PC-9 (cell line): ENCODE measurements at regions of chr2 and their contacts with region 1.

Region 1: GRCh38 chr2:180125245-180125962 is 118.3 kb upstream of the CWC22 start:
- DNase-seq: peak; percentile 76 to 84
- H3K4me3 ChIP-seq: no peak overlapping the region
- H3K27ac ChIP-seq: no peak overlapping the region
- H3K4me1 ChIP-seq: peaks cover 11% of the 10 kb centered on the region; the same call in 1 of the 2 replicates
- H3K27me3 ChIP-seq: no peaks in the 10 kb centered on the region
- CTCF ChIP-seq: peak; percentile 87

Region 2: GRCh38 chr2:180156651-180157050 is 31.2 kb after region 1 on chr2:
- CTCF ChIA-PET with region 1: no interaction called
- POLR2A ChIA-PET with region 1: no interaction called
- intact Hi-C with region 1: no loop called
- DNase-seq: no peak
- H3K4me3 ChIP-seq: no peak overlapping the region
- H3K27ac ChIP-seq: no peak overlapping the region
- H3K4me1 ChIP-seq: no peaks in the 10 kb centered on the region
- H3K27me3 ChIP-seq: no peaks in the 10 kb centered on the region
- CTCF ChIP-seq: no peak

Region 3: DNA sequence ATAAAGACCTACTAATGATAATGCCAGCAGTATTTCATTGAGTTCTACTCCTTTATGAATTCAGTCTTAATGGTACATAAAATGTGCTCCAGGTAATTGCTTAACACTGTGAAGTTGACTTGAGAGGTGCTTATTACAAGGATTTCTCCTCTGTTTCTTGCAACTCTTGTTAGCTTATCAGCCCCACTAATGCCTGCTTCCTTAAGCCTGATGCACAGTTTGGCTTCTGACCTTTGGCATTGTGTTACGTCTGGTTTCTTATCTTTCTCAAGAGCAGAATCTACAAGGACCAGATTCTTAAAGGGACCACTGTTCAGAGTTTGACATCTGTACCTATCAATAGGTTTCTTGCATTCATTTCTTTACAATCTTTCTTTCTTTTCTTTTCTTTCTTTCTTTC is 105.6 kb after region 1 on chr2:
- CTCF ChIA-PET with region 1: interaction called, 20 read pairs
- POLR2A ChIA-PET with region 1: no interaction called
- intact Hi-C with region 1: no loop called
- DNase-seq: no peak
- H3K4me3 ChIP-seq: no peak overlapping the region
- H3K27ac ChIP-seq: no peak overlapping the region
- H3K4me1 ChIP-seq: no peaks in the 10 kb centered on the region
- H3K27me3 ChIP-seq: no peaks in the 10 kb centered on the region
- CTCF ChIP-seq: no peak

Region 4: GRCh38 chr2:180495606-180496005 is 370.2 kb after region 1 on chr2:
- CTCF ChIA-PET with region 1: no interaction called
- POLR2A ChIA-PET with region 1: no interaction called
- intact Hi-C with region 1: no loop called
- DNase-seq: no peak
- H3K4me3 ChIP-seq: no peak overlapping the region
- H3K27ac ChIP-seq: no peak overlapping the region
- H3K4me1 ChIP-seq: no peaks in the 10 kb centered on the region
- H3K27me3 ChIP-seq: no peaks in the 10 kb centered on the region
- CTCF ChIP-seq: no peak

Region 5: DNA sequence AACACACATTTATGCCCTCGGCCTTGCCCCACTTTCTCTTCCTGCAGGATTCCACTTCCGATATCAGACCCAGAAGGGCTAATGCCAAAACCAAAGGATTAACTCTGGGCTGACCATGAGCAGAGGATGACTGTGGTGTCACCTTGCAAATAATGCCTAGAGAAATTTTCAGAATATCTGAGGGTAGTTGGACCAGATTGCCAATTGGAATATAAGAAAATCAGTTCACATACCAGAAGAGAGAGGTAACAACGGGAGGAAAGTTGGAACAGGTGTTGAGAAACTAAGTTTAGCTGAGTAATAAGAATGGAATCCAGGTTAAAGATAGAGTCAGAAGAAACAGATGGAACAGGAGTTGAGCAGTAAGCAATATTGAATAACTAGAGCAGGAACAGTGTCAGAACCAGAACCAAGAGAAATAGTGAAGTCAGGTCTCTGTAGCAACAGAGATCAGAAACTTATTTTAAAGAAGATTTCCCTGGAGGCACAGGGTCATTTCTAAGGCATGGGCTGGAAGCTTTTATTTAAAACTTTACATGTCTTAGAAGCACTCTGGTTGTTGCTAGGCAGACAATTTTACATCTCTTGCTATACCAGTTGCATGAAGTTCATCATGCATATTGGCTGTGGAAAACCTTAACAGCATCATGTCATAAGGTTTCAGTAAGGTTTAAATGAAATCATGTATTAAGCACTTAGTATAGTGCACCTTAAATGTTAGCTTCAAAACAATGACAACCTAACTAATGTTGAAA is 622.5 kb after region 1 on chr2:
- CTCF ChIA-PET with region 1: no interaction called
- POLR2A ChIA-PET with region 1: no interaction called
- intact Hi-C with region 1: loop called (anchors 5 kb)
- DNase-seq: peak; percentile 67 to 95
- H3K4me3 ChIP-seq: peak overlapping the region; percentile 6; the same call in 1 of the 2 replicates
- H3K27ac ChIP-seq: peak overlapping the region; percentile 49
- H3K4me1 ChIP-seq: peaks cover 26% of the 10 kb centered on the region
- H3K27me3 ChIP-seq: no peaks in the 10 kb centered on the region
- CTCF ChIP-seq: no peak

Region 6: GRCh38 chr2:181077128-181077709 is 951.8 kb after region 1 on chr2:
- CTCF ChIA-PET with region 1: no interaction called
- POLR2A ChIA-PET with region 1: no interaction called
- intact Hi-C with region 1: loop called (anchors 2 kb)
- DNase-seq: peak in 1 of 2 experiments; percentile 63
- H3K4me3 ChIP-seq: no peak overlapping the region
- H3K27ac ChIP-seq: no peak overlapping the region
- H3K4me1 ChIP-seq: no peaks in the 10 kb centered on the region
- H3K27me3 ChIP-seq: no peaks in the 10 kb centered on the region
- CTCF ChIP-seq: peak; percentile 95

Region 7: GRCh38 chr2:181466661-181467576 is 1341.5 kb after region 1 on chr2:
- CTCF ChIA-PET with region 1: interaction called, 6 read pairs
- POLR2A ChIA-PET with region 1: no interaction called
- intact Hi-C with region 1: loop called (anchors 1 kb)
- DNase-seq: peak in 1 of 2 experiments; percentile 58
- H3K4me3 ChIP-seq: no peak overlapping the region
- H3K27ac ChIP-seq: no peak overlapping the region
- H3K4me1 ChIP-seq: no peaks in the 10 kb centered on the region
- H3K27me3 ChIP-seq: no peaks in the 10 kb centered on the region
- CTCF ChIP-seq: peak; percentile 99

Region 8: GRCh38 chr2:181715033-181715630 is 1589.7 kb after region 1 on chr2:
- CTCF ChIA-PET with region 1: interaction called, 17 read pairs
- POLR2A ChIA-PET with region 1: no interaction called
- intact Hi-C with region 1: loop called (anchors 1 kb)
- DNase-seq: peak; percentile 70 to 74
- H3K4me3 ChIP-seq: no peak overlapping the region
- H3K27ac ChIP-seq: no peak overlapping the region
- H3K4me1 ChIP-seq: no peaks in the 10 kb centered on the region
- H3K27me3 ChIP-seq: no peaks in the 10 kb centered on the region
- CTCF ChIP-seq: peak; percentile 97

Region 9: DNA sequence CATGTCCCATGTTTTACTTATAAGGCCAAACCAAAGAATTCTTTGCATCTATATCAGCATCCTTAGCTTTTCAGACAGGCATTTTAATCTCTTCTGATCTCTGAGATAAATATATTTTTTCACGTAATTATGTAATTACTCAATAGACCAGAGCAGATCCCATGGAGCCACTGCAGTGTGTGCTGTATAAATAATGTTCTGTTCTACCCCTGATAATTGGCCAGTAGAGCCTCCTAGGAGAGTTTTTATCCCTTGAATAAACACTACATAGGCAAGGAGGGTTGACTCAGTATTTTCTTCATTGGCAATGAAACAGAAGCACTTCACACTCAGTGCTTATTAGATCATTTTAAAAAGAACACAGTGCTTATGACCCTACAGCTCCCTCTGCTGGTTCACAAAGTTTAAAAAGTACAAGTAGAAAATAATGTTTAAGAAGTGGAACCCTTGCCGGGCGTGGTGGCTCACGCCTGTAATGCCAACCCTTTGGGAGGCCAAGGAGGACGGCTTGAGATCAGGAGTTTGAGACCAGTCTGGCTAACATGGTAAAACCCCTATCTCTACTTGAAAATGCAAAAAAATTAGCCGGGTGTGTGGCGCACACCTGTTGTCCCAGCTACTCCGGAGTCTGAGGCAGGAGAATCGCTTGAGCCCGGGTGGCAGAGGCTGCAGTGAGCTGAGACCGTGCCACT is 1952.2 kb after region 1 on chr2:
- CTCF ChIA-PET with region 1: no interaction called
- POLR2A ChIA-PET with region 1: no interaction called
- intact Hi-C with region 1: loop called (anchors 5 kb)
- DNase-seq: peak; percentile 47 to 76
- H3K4me3 ChIP-seq: no peak overlapping the region
- H3K27ac ChIP-seq: no peak overlapping the region
- H3K4me1 ChIP-seq: 0 out of 2 replicates have a peak, but pooled peaks cover 4% of the 10 kb centered on the region
- H3K27me3 ChIP-seq: no peaks in the 10 kb centered on the region
- CTCF ChIP-seq: peak; percentile 98